ENCODE measurements at regions of chr12 and their contacts with region 1.

Region 1: DNA sequence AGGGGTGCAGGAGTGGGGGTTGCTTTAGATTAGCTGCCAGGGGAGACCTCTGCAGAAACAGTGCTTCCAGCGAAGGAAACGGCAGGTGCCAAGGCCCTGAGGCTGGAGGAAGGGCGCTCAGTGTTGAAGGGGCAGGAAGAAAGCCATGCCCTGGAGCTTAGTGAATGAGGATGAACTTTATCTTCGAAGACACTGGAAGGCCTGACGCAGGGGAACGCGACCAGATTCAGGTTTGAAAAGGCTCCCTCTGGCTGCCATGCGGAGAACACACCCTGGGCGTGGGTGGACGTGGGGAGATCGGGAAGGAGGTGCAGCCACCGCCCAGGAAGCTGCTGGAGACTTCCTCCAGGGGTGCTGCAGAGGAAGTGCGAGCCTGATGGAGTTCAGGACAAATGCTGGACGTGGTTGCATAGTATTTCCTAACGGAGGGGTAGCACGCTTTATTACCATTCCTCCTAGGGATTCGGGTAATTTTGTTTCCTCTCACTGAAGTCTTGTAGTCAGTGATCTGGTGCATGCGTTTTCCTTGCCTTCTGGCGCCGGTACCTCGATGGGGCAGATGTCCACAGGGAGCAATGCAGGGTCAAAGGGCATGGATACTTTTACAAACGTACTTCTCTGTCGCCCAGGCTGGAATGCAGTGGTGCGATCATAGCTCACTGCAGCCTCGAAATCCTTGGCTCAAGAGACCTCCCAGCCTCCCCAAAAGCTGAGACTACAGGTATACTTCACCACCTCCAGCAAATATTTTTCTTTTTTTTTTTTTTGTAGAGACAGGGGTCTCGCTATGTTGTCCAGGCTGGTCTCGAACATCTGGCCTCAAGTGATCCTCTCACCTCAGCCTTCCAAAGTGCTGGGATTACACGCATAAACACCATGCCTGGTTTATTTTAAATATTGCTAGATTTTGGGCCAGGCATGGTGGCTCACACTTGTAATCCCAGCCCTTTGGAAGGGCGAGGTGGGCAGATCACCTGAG is 26.4 kb upstream of the UBC start:
- DNase-seq: peak; percentile 95
- H3K4me3 Mint-ChIP-seq: no peak overlapping the region
- H3K27ac Mint-ChIP-seq: no peak overlapping the region
- H3K4me1 Mint-ChIP-seq: peaks cover 17% of the 10 kb centered on the region
- H3K27me3 Mint-ChIP-seq: no peaks in the 10 kb centered on the region

Region 2: GRCh38 chr12:124906606-124907261 is 34.1 kb before region 1 on chr12:
- intact Hi-C with region 1: loop called (anchors 1 kb)
- DNase-seq: peak; percentile 98
- H3K4me3 Mint-ChIP-seq: no peak overlapping the region
- H3K27ac Mint-ChIP-seq: no peak overlapping the region
- H3K4me1 Mint-ChIP-seq: peaks cover 24% of the 10 kb centered on the region
- H3K27me3 Mint-ChIP-seq: no peaks in the 10 kb centered on the region

Region 3: GRCh38 chr12:124917135-124917840 is 23.6 kb before region 1 on chr12:
- intact Hi-C with region 1: loop called (anchors 1 kb)
- DNase-seq: peak; percentile 97
- H3K4me3 Mint-ChIP-seq: peak overlapping the region; percentile 99
- H3K27ac Mint-ChIP-seq: peak overlapping the region; percentile 100
- H3K4me1 Mint-ChIP-seq: peaks cover 75% of the 10 kb centered on the region
- H3K27me3 Mint-ChIP-seq: peaks cover 2% of the 10 kb centered on the region

Measured in activated CD4-positive, alpha-beta T cell treated with anti-CD3 and anti-CD28 coated beads, Interleukin-2, amount 10 ng/mL, durations not matched to agents 24 days and 14 days (primary cell).